ENCODE measurements at regions of chr2 and their contacts with region 1.

Region 1: DNA sequence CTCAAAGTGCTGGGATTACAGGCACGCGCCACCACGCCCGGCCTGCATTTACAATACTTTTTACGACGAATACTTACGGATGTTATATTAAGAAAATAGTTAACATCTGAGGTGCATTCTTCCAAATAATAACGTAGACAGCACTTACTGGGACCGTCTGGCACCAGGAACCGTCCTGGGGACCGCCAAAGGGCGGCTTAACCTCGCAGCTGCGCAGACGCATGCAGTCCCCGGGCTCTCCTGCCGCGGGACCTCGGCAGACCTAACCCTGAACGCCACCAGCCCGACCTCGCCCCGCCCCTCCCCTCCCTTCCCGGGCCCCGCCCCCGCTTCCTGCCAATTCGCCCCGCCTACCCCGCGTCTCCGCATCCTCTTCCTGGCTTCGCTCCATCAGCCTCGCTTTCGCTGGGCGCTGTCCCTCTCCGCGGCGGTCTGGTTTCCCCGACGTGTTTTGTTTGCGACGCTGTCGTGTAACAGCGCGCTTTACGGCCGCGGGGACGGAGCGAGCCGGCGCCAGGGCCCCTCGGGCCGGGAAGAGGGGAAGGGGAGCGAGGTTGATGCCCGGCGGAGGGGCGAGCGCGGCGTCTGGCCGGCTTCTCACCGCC is at the start of gene CNOT11:
- DNase-seq: peak; percentile 97

Region 2: DNA sequence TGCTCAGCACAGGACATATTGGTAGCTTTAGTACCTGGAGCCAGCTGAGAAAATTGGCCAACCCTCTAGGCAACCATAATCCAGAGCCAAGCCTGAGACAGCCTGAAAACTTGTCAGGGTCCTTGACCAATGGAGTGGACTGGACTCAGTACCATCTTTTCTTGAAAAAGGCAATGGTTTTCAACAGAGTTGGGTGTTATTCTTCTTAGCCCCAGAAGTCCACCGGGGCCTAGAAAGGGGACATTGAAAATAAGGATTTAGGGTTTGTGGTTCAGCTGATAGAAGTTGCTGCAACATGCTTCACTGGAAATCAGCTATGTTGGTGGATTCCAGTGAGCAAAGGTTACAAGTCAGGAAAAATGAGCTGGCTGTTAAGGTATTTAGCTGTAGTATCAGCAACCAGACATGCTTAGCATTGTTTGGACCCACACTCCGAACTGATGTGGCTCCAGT is 21.9 kb before region 1 on chr2:
- CTCF ChIA-PET with region 1: no interaction called
- POLR2A ChIA-PET with region 1: interaction called, 17 read pairs
- DNase-seq: no peak

Measured in HEK293T (cell line).